ENCODE measurements at regions of chr2 and their contacts with region 1.

Region 1: GRCh38 chr2:157312866-157313486 is 12.6 kb downstream of the ERMN start:
- DNase-seq: no peak
- H3K4me3 ChIP-seq: no peak overlapping the region
- H3K27ac ChIP-seq: no peak overlapping the region
- H3K4me1 ChIP-seq: no peaks in the 10 kb centered on the region
- H3K27me3 ChIP-seq: no peaks in the 10 kb centered on the region
- CTCF ChIP-seq: no peak

Region 2: GRCh38 chr2:157015015-157015575 is 297.9 kb before region 1 on chr2:
- CTCF ChIA-PET with region 1: no interaction called
- POLR2A ChIA-PET with region 1: no interaction called
- intact Hi-C with region 1: no loop called
- DNase-seq: no peak
- H3K4me3 ChIP-seq: no peak overlapping the region
- H3K27ac ChIP-seq: no peak overlapping the region
- H3K4me1 ChIP-seq: no peaks in the 10 kb centered on the region
- H3K27me3 ChIP-seq: no peaks in the 10 kb centered on the region
- CTCF ChIP-seq: no peak

Region 3: GRCh38 chr2:157327621-157328500 is 14.9 kb after region 1 on chr2:
- CTCF ChIA-PET with region 1: no interaction called
- POLR2A ChIA-PET with region 1: no interaction called
- intact Hi-C with region 1: loop called (anchors 2 kb)
- DNase-seq: peak in 1 of 2 experiments; percentile 51
- H3K4me3 ChIP-seq: no peak overlapping the region
- H3K27ac ChIP-seq: no peak overlapping the region
- H3K4me1 ChIP-seq: no peaks in the 10 kb centered on the region
- H3K27me3 ChIP-seq: no peaks in the 10 kb centered on the region
- CTCF ChIP-seq: peak; percentile 75

Region 4: DNA sequence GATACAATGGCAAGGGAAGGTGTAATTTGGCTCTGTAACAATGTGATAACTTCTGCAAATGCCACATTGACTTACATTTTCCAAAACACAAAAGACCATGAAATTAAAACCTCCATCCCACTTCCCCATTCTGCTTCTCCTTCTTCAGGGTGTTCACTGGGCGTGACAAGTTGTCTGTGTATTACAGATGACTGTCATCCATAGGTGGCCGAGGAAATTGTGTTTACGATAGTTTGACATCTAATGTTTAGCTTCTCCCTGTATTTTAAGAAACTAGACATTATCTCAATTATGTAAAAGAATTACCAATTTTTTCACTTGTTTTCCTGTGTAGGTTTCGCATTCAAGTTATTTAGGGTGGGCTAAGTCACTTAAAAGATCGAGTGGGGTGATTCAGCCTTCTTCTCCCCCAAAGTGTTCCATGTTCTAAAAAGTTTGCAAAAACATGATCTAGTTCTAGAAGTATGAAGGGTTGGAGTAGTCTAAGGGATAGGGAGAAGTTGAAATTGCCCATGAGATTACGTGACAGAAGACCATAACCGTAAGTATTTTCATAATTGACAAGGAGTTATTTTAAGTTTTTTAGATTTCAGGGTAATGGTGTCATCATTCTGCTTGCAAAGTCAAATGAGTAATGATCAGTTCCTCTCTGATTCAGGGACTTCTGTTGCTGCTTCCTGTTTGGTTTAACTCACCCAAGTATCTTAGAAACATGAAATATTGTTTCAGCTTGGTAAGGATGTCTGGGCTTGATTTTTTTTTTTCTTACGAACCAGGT is 156.1 kb after region 1 on chr2:
- CTCF ChIA-PET with region 1: no interaction called
- POLR2A ChIA-PET with region 1: no interaction called
- intact Hi-C with region 1: no loop called
- DNase-seq: no peak
- H3K4me3 ChIP-seq: no peak overlapping the region
- H3K27ac ChIP-seq: no peak overlapping the region
- H3K4me1 ChIP-seq: no peaks in the 10 kb centered on the region
- H3K27me3 ChIP-seq: no peaks in the 10 kb centered on the region
- CTCF ChIP-seq: no peak

Measured in PC-9 (cell line).